ENCODE measurements at regions of chr7 and their contacts with region 1.

Region 1: GRCh38 chr7:154927624-154928143 is 75.2 kb downstream of the PAXIP1 start:
- DNase-seq: peak; percentile 72
- H3K4me3 ChIP-seq: peak overlapping the region; percentile 56 to 76 (median 60)
- H3K27ac ChIP-seq: peak overlapping the region; percentile 81
- H3K4me1 ChIP-seq: peaks cover 4% of the 10 kb centered on the region
- H3K27me3 ChIP-seq: no peaks in the 10 kb centered on the region
- CTCF ChIP-seq: peak; percentile 66 to 67

Region 2: GRCh38 chr7:154953006-154953684 is 25.5 kb after region 1 on chr7:
- CTCF ChIA-PET with region 1: interaction called, 3 read pairs
- dilution Hi-C with region 1: no loop called
- in situ Hi-C with region 1: no loop called
- intact Hi-C with region 1: loop called (anchors 1 kb)
- DNase-seq: peak; percentile 16
- H3K4me3 ChIP-seq: no peak overlapping the region
- H3K27ac ChIP-seq: no peak overlapping the region
- H3K4me1 ChIP-seq: no peaks in the 10 kb centered on the region
- H3K27me3 ChIP-seq: no peaks in the 10 kb centered on the region
- CTCF ChIP-seq: peak; percentile 66 to 75

Region 3: GRCh38 chr7:155069992-155070751 is 142.5 kb after region 1 on chr7 and contains the start of gene HTR5A:
- CTCF ChIA-PET with region 1: no interaction called
- dilution Hi-C with region 1: no loop called
- in situ Hi-C with region 1: no loop called
- intact Hi-C with region 1: loop called (anchors 5 kb)
- DNase-seq: peak; percentile 77
- H3K4me3 ChIP-seq: no peak within 1 kb of the TSS
- H3K27ac ChIP-seq: no peak within 1 kb of the TSS
- H3K4me1 ChIP-seq: peaks cover 3% of the 10 kb centered on the region
- H3K27me3 ChIP-seq: peaks cover 5% of the 10 kb centered on the region
- CTCF ChIP-seq: no peak
- total RNA-seq, gene HTR5A: not detected

Region 4: DNA sequence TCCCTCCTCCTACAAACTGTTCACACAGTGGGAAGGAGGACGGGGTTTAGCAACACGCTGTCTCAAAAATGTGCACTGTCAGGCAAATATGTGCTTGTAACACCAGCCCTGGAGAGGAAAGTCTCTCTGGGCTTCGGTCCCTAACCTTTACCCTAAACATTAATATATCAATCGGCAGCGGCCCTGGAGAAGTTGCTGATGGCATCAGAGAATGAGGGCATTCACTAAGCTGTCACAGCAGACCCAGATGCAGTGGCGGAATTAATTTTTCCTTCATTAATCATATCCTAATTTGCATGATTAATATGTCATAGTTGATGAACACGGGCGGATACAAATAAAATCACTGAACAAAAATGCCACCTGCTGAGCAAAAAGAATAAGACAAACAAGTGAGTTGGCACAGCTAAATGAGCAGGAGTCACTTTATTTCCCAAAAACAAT is 324.8 kb after region 1 on chr7:
- CTCF ChIA-PET with region 1: no interaction called
- dilution Hi-C with region 1: no loop called
- in situ Hi-C with region 1: no loop called
- intact Hi-C with region 1: loop called (anchors 5 kb)
- DNase-seq: no peak
- H3K4me3 ChIP-seq: no peak overlapping the region
- H3K27ac ChIP-seq: no peak overlapping the region
- H3K4me1 ChIP-seq: peaks cover 3% of the 10 kb centered on the region
- H3K27me3 ChIP-seq: peaks cover 3% of the 10 kb centered on the region
- CTCF ChIP-seq: no peak

Region 5: DNA sequence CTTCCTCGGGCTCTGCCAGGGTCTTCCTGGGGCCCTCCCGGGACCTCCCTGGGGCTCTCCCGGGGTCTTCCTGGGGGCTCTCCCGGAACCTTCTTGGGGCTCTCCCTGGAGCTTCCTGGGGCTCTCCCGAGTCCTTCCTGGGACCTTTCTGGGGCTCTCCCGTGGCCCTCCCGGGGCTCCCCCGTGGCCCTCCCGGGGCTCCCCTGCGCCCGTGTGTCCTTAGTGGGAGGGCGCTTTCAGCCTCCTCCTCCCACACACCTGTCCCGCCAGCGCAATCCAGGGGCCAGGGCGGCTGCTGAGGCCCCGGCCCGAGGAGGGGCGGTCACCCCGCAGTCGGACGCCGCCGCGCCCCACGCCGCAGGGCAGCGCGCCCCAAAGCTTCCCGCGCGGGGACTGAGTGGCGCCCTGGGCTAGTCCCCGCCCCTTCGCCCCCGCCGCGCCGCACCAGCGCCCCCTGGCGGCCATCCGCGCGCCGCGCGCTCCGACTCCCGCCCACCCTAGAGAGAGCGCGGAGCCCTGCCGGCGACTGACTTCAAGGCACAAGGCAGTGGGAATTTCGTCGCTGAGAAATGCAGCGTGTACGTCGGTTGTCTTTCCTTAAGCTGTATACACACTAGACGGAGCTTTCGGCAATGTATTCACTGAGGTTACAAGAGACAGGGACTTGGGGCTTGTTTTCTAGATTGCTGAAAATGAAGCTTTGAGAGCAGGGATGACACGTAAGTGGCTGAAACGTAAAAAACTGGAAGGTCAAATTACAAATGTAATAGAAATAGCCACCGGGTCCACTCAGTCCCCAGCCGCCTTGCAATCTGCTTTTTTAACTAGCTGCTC is 417.1 kb after region 1 on chr7:
- CTCF ChIA-PET with region 1: interaction called, 4 read pairs
- dilution Hi-C with region 1: no loop called
- in situ Hi-C with region 1: loop called in 1 of 2 experiments (anchors 25 kb)
- intact Hi-C with region 1: loop called (anchors 1 kb)
- DNase-seq: peak; percentile 41
- H3K4me3 ChIP-seq: peak overlapping the region in 2 of 3 experiments; percentile 36 to 54
- H3K27ac ChIP-seq: no peak overlapping the region
- H3K4me1 ChIP-seq: no peaks in the 10 kb centered on the region
- H3K27me3 ChIP-seq: no peaks in the 10 kb centered on the region
- CTCF ChIP-seq: peak; percentile 56 to 70

Region 6: DNA sequence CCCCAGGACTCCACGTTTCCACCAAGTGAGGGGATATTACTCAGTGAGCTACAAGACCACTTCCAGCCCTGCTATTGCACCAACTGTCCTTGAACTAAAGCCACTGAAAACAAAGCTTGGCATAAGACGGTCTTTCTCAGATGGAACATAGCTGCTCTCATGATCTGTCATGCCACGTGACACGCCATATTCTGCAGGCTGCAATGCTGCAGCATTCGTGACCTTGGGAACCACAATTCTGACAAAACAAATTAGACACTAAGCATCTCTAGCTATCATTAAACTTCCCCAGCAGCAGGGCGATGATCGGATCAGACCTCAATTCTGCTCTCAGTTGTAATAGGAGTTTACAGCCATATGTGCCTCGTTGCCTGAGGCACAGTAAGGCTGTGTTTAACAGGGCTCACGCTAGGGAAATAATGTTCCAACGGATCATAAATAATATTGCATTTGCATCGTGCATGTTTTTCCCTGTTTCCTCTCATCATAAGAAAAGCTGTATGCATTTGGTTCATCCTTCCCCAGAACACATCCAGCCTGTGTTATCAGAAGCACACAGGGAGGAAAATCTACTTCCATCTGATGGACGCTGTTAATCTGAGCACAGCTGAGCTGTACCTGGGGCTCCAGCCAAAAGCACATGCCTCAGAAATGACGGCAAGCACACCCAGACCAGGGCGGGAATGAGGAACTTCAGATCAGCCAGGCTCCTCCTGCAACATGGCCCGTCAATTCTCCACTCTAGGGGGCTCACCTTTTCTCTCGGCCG is 657.3 kb after region 1 on chr7:
- CTCF ChIA-PET with region 1: no interaction called
- dilution Hi-C with region 1: no loop called
- in situ Hi-C with region 1: no loop called
- intact Hi-C with region 1: loop called (anchors 5 kb)
- DNase-seq: no peak
- H3K4me3 ChIP-seq: no peak overlapping the region
- H3K27ac ChIP-seq: no peak overlapping the region
- H3K4me1 ChIP-seq: peaks cover 21% of the 10 kb centered on the region
- H3K27me3 ChIP-seq: no peaks in the 10 kb centered on the region
- CTCF ChIP-seq: no peak

Region 7: GRCh38 chr7:155763691-155764437 is 836.2 kb after region 1 on chr7:
- CTCF ChIA-PET with region 1: no interaction called
- dilution Hi-C with region 1: no loop called
- in situ Hi-C with region 1: loop called (anchors 25 kb)
- intact Hi-C with region 1: loop called (anchors 2 kb)
- DNase-seq: no peak
- H3K4me3 ChIP-seq: no peak overlapping the region
- H3K27ac ChIP-seq: no peak overlapping the region
- H3K4me1 ChIP-seq: no peaks in the 10 kb centered on the region
- H3K27me3 ChIP-seq: no peaks in the 10 kb centered on the region
- CTCF ChIP-seq: no peak